Heart left ventricle (tissue), 16 donors: ENCODE measurements at regions of chr17 and their contacts with region 1.

Region 1: DNA sequence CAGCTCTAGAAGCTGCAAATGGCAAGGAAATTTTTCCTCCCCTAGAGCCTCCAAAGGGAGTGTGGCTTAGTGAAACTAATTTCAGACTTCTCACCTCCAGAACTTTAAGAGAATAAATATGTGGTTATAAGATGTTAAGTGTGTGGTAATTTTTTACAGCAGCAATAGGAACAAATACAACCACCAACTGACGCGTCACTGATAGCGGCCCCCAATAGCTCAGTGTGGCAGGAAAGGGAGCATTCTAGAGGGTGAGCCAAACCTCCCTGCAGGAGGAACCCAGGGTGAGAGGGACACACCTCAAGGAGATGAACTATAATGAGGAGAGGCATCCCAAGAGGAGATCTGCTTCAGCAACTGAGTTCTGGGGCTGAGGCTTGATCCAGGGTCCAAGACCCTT is 4.0 kb downstream of the CCL4 start:
- DNase-seq: no peak
- ATAC-seq: no peak
- H3K4me3 ChIP-seq: no peak overlapping the region
- H3K27ac ChIP-seq: peak overlapping the region in 1 of 12 donors; percentile 55
- H3K4me1 ChIP-seq: peaks cover 0 to 40% (median 0%) of the 10 kb centered on the region in 12 donors
- H3K27me3 ChIP-seq: peaks cover 0 to 6% (median 0%) of the 10 kb centered on the region in 9 donors
- CTCF ChIP-seq: no peak
- POLR2A ChIP-seq: no peak

Region 2: DNA sequence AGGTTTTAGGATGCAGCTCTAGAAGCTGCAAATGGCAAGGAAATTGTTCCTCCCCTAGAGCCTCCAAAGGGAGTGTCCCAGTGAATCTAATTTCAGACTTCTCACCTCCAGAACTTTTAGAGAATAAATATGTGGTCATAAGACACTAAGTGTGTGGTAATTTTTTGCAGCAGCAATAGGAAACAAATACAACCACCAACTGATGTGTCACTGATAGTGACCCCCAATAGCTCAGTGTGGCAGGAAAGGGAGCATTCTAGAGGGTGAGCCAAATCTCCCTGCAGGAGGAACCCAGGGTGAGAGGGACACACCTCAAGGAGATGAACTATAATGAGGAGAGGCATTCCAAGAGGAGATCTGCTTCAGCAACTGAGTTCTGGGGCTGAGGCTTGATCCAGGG is 107.3 kb after region 1 on chr17:
- intact Hi-C with region 1: loop called in 1 of 10 experiments (anchors 1 kb)
- DNase-seq: no peak
- ATAC-seq: no peak
- H3K4me3 ChIP-seq: no peak overlapping the region
- H3K27ac ChIP-seq: no peak overlapping the region
- H3K4me1 ChIP-seq: peaks cover 0 to 7% (median 0%) of the 10 kb centered on the region in 12 donors
- H3K27me3 ChIP-seq: peaks cover 0 to 40% (median 0%) of the 10 kb centered on the region in 9 donors
- CTCF ChIP-seq: no peak
- POLR2A ChIP-seq: no peak